ENCODE measurements at regions of chr9 and their contacts with region 1.

Region 1: GRCh38 chr9:77177161-77177893 is at the start of gene VPS13A:
- DNase-seq: peak; percentile 89 to 96 (median 89)
- H3K4me3 ChIP-seq: peak within 1 kb of the TSS; percentile 77 to 79
- H3K4me3 Mint-ChIP-seq: peak within 1 kb of the TSS; percentile 90 to 98 (median 96)
- H3K27ac ChIP-seq: peak within 1 kb of the TSS; percentile 92
- H3K27ac Mint-ChIP-seq: peak within 1 kb of the TSS; percentile 92 to 98 (median 94)
- H3K4me1 ChIP-seq: peaks cover 28% of the 10 kb centered on the region
- H3K4me1 Mint-ChIP-seq: peaks cover 20 to 46% (median 28%) of the 10 kb centered on the region in 4 donors
- H3K27me3 ChIP-seq: no peaks in the 10 kb centered on the region
- H3K27me3 Mint-ChIP-seq: no peaks in the 10 kb centered on the region
- total RNA-seq, gene VPS13A: 53.5 to 58.2 TPM

Region 2: GRCh38 chr9:76023715-76024195 is 1153.6 kb before region 1 on chr9:
- CTCF ChIA-PET with region 1: no interaction called
- POLR2A ChIA-PET with region 1: no interaction called
- intact Hi-C with region 1: loop called (anchors 5 kb)
- DNase-seq: peak; percentile 58 to 76 (median 69)
- H3K4me3 ChIP-seq: peak overlapping the region; percentile 9 to 36
- H3K4me3 Mint-ChIP-seq: peak overlapping the region; percentile 63 to 84 (median 78)
- H3K27ac ChIP-seq: peak overlapping the region; percentile 31
- H3K27ac Mint-ChIP-seq: peak overlapping the region; percentile 76 to 96 (median 87)
- H3K4me1 ChIP-seq: peaks cover 68% of the 10 kb centered on the region
- H3K4me1 Mint-ChIP-seq: peaks cover 58 to 93% (median 75%) of the 10 kb centered on the region in 4 donors
- H3K27me3 ChIP-seq: no peaks in the 10 kb centered on the region
- H3K27me3 Mint-ChIP-seq: no peaks in the 10 kb centered on the region

Region 3: DNA sequence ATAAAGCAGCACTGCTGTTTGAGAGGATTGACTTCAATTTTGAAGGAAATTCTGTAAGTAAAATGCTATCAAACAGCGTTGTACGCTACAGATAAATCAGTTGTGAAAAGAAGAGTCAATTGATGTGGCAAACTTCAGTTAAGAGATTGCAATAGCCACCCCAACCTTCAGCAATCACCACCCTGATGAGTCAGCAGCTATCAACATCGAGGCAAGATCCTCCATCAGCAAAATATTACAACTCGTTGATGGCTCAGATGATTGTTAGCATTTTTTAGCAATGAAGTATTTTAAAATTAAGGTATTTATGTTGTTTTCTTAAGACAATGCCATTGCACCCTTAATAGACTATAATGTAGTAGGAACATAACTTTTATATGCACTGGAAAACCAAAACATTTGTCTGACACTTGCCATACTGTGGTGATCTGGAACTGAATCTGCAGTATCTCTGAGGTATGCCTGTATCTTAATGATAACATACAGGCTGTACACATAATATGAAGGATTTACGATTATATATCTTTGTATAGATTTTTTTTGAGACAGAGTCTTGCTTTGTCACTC is 47.5 kb after region 1 on chr9:
- CTCF ChIA-PET with region 1: no interaction called
- POLR2A ChIA-PET with region 1: no interaction called
- intact Hi-C with region 1: loop called (anchors 5 kb)
- DNase-seq: no peak
- H3K4me3 ChIP-seq: no peak overlapping the region
- H3K4me3 Mint-ChIP-seq: no peak overlapping the region
- H3K27ac ChIP-seq: no peak overlapping the region
- H3K27ac Mint-ChIP-seq: no peak overlapping the region
- H3K4me1 ChIP-seq: no peaks in the 10 kb centered on the region
- H3K4me1 Mint-ChIP-seq: peaks cover 0 to 6% (median 2%) of the 10 kb centered on the region in 4 donors
- H3K27me3 ChIP-seq: no peaks in the 10 kb centered on the region
- H3K27me3 Mint-ChIP-seq: no peaks in the 10 kb centered on the region

Region 4: DNA sequence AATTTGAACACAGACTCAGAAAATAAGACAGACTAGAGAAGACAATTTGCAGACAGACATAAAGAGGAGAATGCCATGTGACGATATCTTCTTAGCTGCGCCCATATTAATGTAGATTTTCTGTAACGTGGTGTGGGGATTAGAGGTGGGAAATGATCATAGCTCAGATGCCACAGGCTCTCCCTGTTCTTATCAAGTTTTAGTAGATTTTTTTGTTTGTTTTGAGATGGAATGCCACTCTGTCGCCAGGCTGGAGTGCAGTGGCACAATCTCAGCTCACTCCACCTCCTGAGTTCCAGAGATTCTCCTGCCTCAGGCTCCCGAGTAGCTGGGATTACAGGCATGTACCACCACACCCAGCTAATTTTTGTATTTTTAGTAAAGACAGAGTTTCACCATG is 59.4 kb after region 1 on chr9:
- CTCF ChIA-PET with region 1: no interaction called
- POLR2A ChIA-PET with region 1: no interaction called
- intact Hi-C with region 1: no loop called
- DNase-seq: no peak
- H3K4me3 ChIP-seq: no peak overlapping the region
- H3K4me3 Mint-ChIP-seq: no peak overlapping the region
- H3K27ac ChIP-seq: no peak overlapping the region
- H3K27ac Mint-ChIP-seq: no peak overlapping the region
- H3K4me1 ChIP-seq: no peaks in the 10 kb centered on the region
- H3K4me1 Mint-ChIP-seq: peaks cover 0 to 6% (median 3%) of the 10 kb centered on the region in 4 donors
- H3K27me3 ChIP-seq: no peaks in the 10 kb centered on the region
- H3K27me3 Mint-ChIP-seq: no peaks in the 10 kb centered on the region

Region 5: DNA sequence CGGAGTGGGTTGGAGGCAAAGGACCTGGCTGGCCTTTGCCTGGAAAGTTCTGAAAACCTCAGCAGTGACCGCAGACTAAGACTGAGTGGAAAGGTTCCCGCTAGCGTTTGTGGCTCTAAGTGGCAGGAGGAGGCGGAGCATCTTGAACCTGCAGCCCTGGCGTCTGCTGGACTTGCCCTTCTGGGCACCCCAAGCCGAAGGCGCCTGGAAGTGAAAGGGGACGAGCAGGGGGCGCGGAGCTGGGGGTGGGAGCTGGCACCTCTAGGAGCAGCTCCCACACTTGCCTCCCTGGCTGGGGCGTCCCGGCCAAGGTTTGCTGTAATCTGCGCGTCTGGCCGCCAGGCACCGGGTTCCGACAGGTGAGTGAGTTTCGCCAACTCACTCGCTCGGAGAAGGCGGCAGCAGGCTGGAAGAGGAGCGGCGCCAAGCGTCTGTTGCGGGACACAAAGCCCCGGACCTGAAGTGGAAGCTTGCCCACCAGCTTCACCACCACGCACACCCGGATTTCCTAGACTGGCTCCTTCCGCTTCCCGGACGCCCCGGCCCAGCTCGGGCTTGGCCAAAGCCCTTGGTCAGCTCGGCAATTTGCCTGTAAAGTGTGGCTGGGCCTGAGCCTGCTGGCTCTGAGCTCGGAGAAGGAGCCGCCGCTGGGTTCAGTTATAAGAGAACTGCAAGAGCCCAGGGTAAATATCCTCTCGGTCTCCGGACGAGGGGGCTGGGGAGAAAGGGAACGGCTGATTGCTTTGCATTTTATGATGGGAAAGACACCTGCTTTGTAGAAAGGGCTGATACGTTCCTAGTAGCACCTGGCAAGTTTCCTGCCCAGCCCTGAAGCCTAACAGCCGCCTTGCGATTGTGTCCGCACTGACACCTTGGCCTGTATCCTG is 471.1 kb after region 1 on chr9 and contains the start of gene GNA14:
- CTCF ChIA-PET with region 1: no interaction called
- POLR2A ChIA-PET with region 1: no interaction called
- intact Hi-C with region 1: no loop called
- DNase-seq: no peak
- H3K4me3 ChIP-seq: no peak within 1 kb of the TSS
- H3K4me3 Mint-ChIP-seq: peak within 1 kb of the TSS; percentile 48 to 77 (median 62)
- H3K27ac ChIP-seq: no peak within 1 kb of the TSS
- H3K27ac Mint-ChIP-seq: peak within 1 kb of the TSS in 1 of 7 donors; percentile 29
- H3K4me1 ChIP-seq: no peaks in the 10 kb centered on the region
- H3K4me1 Mint-ChIP-seq: peaks cover 2 to 21% (median 14%) of the 10 kb centered on the region in 4 donors
- H3K27me3 ChIP-seq: peaks cover 11% of the 10 kb centered on the region
- H3K27me3 Mint-ChIP-seq: peaks cover 29 to 34% of the 10 kb centered on the region in 2 donors
- total RNA-seq, gene GNA14: not detected

Region 6: GRCh38 chr9:78213712-78214111 is 1036.4 kb after region 1 on chr9:
- CTCF ChIA-PET with region 1: no interaction called
- POLR2A ChIA-PET with region 1: no interaction called
- intact Hi-C with region 1: loop called (anchors 5 kb)
- DNase-seq: peak in 4 of 5 donors; percentile 29 to 44 (median 38)
- H3K4me3 ChIP-seq: no peak overlapping the region
- H3K4me3 Mint-ChIP-seq: peak overlapping the region in 4 of 8 donors; percentile 21 to 56 (median 44)
- H3K27ac ChIP-seq: no peak overlapping the region
- H3K27ac Mint-ChIP-seq: peak overlapping the region in 3 of 7 donors; percentile 30 to 65 (median 44)
- H3K4me1 ChIP-seq: peaks cover 37% of the 10 kb centered on the region
- H3K4me1 Mint-ChIP-seq: peaks cover 32 to 47% (median 37%) of the 10 kb centered on the region in 4 donors
- H3K27me3 ChIP-seq: no peaks in the 10 kb centered on the region
- H3K27me3 Mint-ChIP-seq: no peaks in the 10 kb centered on the region

Region 7: GRCh38 chr9:78296893-78297671 is 1119.8 kb after region 1 on chr9 and contains the start of gene PSAT1:
- CTCF ChIA-PET with region 1: no interaction called
- POLR2A ChIA-PET with region 1: interaction called, 3 read pairs
- intact Hi-C with region 1: loop called (anchors 5 kb)
- DNase-seq: peak; percentile 86 to 90 (median 88)
- H3K4me3 ChIP-seq: peak within 1 kb of the TSS; percentile 55 to 83
- H3K4me3 Mint-ChIP-seq: peak within 1 kb of the TSS; percentile 89 to 95 (median 90)
- H3K27ac ChIP-seq: peak within 1 kb of the TSS; percentile 40
- H3K27ac Mint-ChIP-seq: peak within 1 kb of the TSS; percentile 43 to 91 (median 80)
- H3K4me1 ChIP-seq: peaks cover 25% of the 10 kb centered on the region
- H3K4me1 Mint-ChIP-seq: peaks cover 18 to 37% (median 25%) of the 10 kb centered on the region in 4 donors
- H3K27me3 ChIP-seq: no peaks in the 10 kb centered on the region
- H3K27me3 Mint-ChIP-seq: peaks cover 0 to 2% of the 10 kb centered on the region in 2 donors
- total RNA-seq, gene PSAT1: 9.7 to 10.3 TPM